AG04449 (cell line): ENCODE measurements at regions of chr1 and their contacts with region 1.

Region 1: DNA sequence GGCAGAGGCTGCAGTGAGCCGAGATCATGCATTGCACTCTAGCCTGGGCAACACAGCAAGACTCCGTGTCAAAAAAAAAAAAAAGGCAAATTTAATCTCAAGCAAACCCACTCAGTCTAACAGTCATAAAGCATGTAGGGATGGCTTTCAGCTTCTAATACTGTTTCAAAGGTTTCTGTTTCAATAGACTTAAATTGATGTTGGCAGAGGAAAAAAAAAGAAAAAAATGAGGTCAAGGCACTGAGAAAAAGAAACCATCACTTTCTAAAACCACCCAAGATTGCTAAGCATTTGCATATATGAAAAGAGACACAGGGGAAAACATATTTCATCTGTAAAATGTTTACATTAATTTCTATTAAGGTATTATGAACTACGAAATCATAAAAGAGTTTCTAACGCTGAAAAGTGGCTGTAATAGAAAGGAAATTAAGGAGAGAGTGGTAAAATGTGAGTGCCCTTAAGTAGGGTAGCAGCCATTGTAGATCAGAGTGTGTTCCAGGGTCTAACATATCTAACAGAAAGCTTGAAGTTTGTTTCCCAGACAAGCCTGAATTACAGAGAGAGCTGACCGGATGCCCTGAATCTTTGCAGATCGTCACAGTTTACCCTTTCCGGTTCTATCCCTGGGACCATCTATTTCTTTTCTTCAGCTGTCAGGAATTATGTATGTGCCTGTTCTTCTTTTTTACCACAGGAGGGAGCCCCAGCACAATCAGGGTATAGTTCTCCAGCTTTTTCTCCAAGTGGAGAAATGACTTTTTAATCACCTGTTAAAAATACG is 70.0 kb downstream of the PLD5 start:
- DNase-seq: no peak
- H3K4me3 ChIP-seq: no peak overlapping the region
- CTCF ChIP-seq: peak; percentile 51

Region 2: GRCh38 chr1:242467556-242468145 is 13.2 kb after region 1 on chr1:
- CTCF ChIA-PET with region 1: interaction called, 13 read pairs
- POLR2A ChIA-PET with region 1: interaction called, 3 read pairs
- DNase-seq: no peak
- H3K4me3 ChIP-seq: no peak overlapping the region
- CTCF ChIP-seq: peak; percentile 40

Region 3: DNA sequence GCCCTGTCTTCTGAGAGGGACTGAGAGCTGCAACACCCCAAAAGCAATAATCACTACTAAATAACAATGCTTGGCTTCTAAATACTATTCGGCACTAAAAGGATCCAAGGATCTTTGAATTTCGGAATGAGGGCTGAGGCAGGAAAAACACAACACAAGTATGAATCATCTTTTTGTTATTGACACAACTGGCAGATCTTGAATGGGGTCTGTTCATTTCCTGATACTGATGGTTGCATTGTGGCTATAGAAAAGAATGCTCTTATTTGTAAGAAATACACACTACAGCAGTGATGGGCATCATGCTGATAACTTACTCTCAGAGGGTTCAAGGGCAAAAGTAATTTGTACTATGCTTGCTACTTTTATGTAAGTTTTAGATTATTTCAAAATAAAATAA is 219.2 kb after region 1 on chr1:
- CTCF ChIA-PET with region 1: no interaction called
- POLR2A ChIA-PET with region 1: no interaction called
- DNase-seq: no peak
- H3K4me3 ChIP-seq: no peak overlapping the region
- CTCF ChIP-seq: no peak

Region 4: GRCh38 chr1:243320224-243320623 is 865.8 kb after region 1 on chr1:
- CTCF ChIA-PET with region 1: interaction called, 26 read pairs
- POLR2A ChIA-PET with region 1: no interaction called
- DNase-seq: no peak
- H3K4me3 ChIP-seq: no peak overlapping the region
- CTCF ChIP-seq: no peak

Region 5: GRCh38 chr1:243325305-243325890 is 870.9 kb after region 1 on chr1:
- CTCF ChIA-PET with region 1: interaction called, 26 read pairs
- POLR2A ChIA-PET with region 1: no interaction called
- DNase-seq: peak; percentile 49
- H3K4me3 ChIP-seq: no peak overlapping the region
- CTCF ChIP-seq: peak; percentile 26